GM10248 (cell line): ENCODE measurements at regions of chr20 and their contacts with region 1.

Region 1: GRCh38 chr20:9407805-9408421 is 106.5 kb upstream of the LAMP5 start:
- DNase-seq: peak; percentile 54
- CTCF ChIP-seq: peak; percentile 80

Region 2: GRCh38 chr20:9392892-9393857 is 14.7 kb before region 1 on chr20:
- CTCF ChIA-PET with region 1: interaction called, 17 read pairs
- POLR2A ChIA-PET with region 1: no interaction called
- DNase-seq: peak; percentile 36
- CTCF ChIP-seq: no peak

Region 3: GRCh38 chr20:9439806-9440205 is 31.9 kb after region 1 on chr20:
- CTCF ChIA-PET with region 1: interaction called, 15 read pairs
- POLR2A ChIA-PET with region 1: no interaction called
- DNase-seq: no peak
- CTCF ChIP-seq: no peak

Region 4: GRCh38 chr20:9474835-9475415 is 67.0 kb after region 1 on chr20:
- CTCF ChIA-PET with region 1: no interaction called
- POLR2A ChIA-PET with region 1: no interaction called
- DNase-seq: no peak
- CTCF ChIP-seq: no peak

Region 5: DNA sequence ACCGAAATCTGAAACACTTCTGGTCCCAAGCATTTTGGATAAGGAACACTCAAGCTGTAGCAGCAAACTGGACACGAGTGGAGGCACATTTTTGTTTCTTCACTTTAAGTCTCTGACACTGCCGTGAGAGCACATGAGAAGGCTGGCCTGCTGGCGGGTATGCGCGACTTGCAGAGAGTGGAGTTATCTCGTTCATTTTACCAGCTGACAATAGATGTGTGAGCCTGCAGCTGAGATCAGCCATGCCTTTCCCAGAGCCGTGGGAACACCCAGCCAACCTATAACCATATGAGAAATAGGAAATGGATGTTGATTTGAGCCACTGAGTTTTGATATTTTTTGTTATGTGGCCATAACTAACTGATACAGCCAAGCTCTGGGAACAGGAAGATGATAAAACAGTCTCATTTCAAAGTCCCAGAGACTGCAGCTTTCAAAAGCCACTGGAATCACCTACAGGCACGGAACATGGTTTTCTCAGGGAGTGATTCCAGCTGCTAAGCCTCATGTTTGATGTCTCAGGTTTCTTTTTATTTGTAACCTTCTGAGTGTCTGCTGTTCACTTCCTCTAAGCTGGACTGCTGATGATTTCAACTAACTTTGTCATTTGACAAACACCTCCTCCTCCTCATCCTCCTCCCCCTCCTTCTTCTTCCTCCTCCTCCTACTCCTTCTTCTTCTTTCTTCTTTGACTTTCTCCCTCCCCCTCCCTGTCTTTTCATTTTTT is 77.9 kb after region 1 on chr20:
- CTCF ChIA-PET with region 1: no interaction called
- POLR2A ChIA-PET with region 1: no interaction called
- DNase-seq: no peak
- CTCF ChIP-seq: no peak

Region 6: GRCh38 chr20:9602847-9603183 is 194.9 kb after region 1 on chr20:
- CTCF ChIA-PET with region 1: interaction called, 193 read pairs
- POLR2A ChIA-PET with region 1: no interaction called
- DNase-seq: no peak
- CTCF ChIP-seq: no peak

Region 7: GRCh38 chr20:9616833-9617489 is 209.0 kb after region 1 on chr20:
- CTCF ChIA-PET with region 1: interaction called, 193 read pairs
- POLR2A ChIA-PET with region 1: no interaction called
- DNase-seq: peak; percentile 52
- CTCF ChIP-seq: peak; percentile 68

Region 8: GRCh38 chr20:10051185-10051584 is 643.3 kb after region 1 on chr20:
- CTCF ChIA-PET with region 1: no interaction called
- POLR2A ChIA-PET with region 1: no interaction called
- DNase-seq: no peak
- CTCF ChIP-seq: no peak